Stomach (tissue), 19 donors: ENCODE measurements at regions of chr14 and their contacts with region 1.

Region 1: GRCh38 chr14:36647824-36648753 is 13.6 kb upstream of the PAX9 start:
- DNase-seq: peak in 1 of 2 donors; percentile 71
- H3K4me3 ChIP-seq: peak overlapping the region; percentile 31 to 59 (median 42)
- H3K27ac ChIP-seq: no peak overlapping the region
- H3K4me1 ChIP-seq: peaks cover 17 to 25% (median 21%) of the 10 kb centered on the region in 4 donors
- H3K27me3 ChIP-seq: peaks cover 15 to 96% (median 74%) of the 10 kb centered on the region in 3 donors
- CTCF ChIP-seq: peak in 3 of 7 experiments; percentile 34 to 46 (median 42)
- EP300 ChIP-seq: no peak
- POLR2A ChIP-seq: no peak

Region 2: DNA sequence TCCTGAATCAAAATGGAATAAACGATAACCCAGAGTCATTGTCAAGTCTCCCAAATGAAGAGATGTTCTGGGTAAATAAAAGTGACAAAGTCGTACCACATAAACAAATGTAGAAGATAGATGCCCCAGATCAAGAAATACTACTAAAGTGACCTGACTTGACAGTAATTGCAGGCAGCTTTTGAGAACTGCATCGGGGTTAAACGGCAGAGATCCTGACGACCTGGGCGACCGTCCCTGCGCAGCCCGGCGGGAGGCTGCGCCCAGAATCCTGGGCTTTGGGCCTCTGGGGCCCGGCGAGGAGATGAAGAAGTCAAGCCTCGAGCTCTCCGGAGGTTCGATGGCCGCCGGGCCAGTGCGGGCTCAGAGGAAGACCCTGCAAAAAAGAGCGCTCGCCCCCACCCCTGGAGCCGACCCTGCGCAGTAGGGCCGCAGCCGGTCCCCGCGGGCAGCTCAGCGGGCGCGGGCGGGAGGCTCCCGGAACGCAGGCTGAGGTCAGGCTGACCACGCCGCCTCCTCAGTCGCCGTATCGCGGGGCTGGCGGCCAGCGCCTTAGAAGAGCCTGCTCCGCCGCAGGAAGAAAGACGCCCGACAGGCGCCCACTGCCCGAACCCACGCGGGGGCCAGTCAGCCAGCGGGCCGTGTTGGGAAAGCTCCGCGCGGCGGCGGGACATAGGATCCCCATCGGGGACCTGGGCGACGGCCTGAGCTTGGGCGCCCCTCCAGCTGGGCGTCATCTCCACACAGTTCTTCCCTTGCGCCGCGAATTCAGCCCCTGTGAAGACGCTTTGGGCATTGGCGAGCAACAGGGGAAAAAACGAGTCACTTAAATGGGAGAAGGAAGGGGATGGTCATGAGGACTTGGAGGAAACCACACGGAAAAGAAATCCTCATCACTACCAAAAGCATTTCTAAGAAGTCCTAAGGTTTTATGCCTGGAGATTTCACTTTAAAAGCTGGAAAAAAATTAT is 144.0 kb before region 1 on chr14:
- intact Hi-C with region 1: no loop called
- DNase-seq: no peak
- H3K4me3 ChIP-seq: peak overlapping the region in 1 of 4 donors; percentile 23
- H3K27ac ChIP-seq: no peak overlapping the region
- H3K4me1 ChIP-seq: peaks cover 5 to 33% (median 18%) of the 10 kb centered on the region in 4 donors
- H3K27me3 ChIP-seq: peaks cover 32 to 99% (median 87%) of the 10 kb centered on the region in 3 donors
- CTCF ChIP-seq: no peak
- EP300 ChIP-seq: no peak
- POLR2A ChIP-seq: no peak

Region 3: GRCh38 chr14:36936013-36936678 is 288.1 kb after region 1 on chr14:
- intact Hi-C with region 1: loop called (anchors 5 kb)
- DNase-seq: no peak
- H3K4me3 ChIP-seq: no peak overlapping the region
- H3K27ac ChIP-seq: no peak overlapping the region
- H3K4me1 ChIP-seq: no peaks in the 10 kb centered on the region
- H3K27me3 ChIP-seq: no peaks in the 10 kb centered on the region
- CTCF ChIP-seq: no peak
- EP300 ChIP-seq: no peak
- POLR2A ChIP-seq: no peak